Calu3 (cell line): ENCODE measurements at regions of chr18 and their contacts with region 1.

Region 1: DNA sequence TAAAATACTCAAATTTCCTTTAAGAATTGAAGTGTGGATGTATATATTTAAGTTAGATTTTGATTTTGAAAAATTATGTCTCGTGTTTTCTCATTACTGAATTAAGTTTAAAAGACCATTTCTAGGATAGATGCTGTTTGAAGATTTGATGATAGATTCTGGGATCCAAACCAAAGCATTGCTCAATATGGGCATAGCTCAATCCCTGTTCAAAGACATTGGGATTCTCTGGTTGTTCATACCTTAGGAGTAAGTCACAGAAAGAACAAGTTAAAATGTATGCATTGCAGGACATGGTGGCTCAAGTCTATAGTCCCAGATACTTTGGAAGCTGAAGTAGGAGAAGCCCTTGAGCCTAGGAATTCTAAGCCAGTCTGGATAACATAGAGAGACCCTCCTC is 622.3 kb downstream of the ADCYAP1 start:
- DNase-seq: no peak
- H3K4me3 Mint-ChIP-seq: no peak overlapping the region
- H3K27ac Mint-ChIP-seq: no peak overlapping the region
- H3K4me1 Mint-ChIP-seq: no peaks in the 10 kb centered on the region
- H3K27me3 Mint-ChIP-seq: no peaks in the 10 kb centered on the region
- CTCF ChIP-seq: no peak

Region 2: DNA sequence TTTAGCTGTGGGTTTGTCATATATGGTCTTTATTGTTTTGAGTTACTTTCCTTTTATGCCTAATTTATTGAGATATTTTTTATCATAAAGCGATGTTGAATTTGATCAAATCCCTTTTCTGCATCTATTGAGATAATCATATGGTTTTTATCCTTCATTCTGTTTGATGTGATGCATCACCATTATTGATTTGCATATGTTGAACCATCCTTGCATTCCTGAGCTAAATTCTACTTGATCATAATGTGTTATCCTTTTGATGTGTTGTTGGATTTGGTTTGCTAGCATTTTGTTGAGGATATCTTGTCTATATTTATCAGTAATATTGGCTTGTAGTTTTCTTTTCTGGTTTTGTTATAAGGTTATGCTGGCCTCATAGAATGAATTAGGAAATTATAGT is 313.9 kb before region 1 on chr18:
- CTCF ChIA-PET with region 1: no interaction called
- intact Hi-C with region 1: no loop called
- DNase-seq: no peak
- H3K4me3 Mint-ChIP-seq: no peak overlapping the region
- H3K27ac Mint-ChIP-seq: no peak overlapping the region
- H3K4me1 Mint-ChIP-seq: no peaks in the 10 kb centered on the region
- H3K27me3 Mint-ChIP-seq: no peaks in the 10 kb centered on the region
- CTCF ChIP-seq: no peak

Region 3: GRCh38 chr18:1383464-1383863 is 143.5 kb before region 1 on chr18:
- CTCF ChIA-PET with region 1: no interaction called
- intact Hi-C with region 1: no loop called
- DNase-seq: no peak
- H3K4me3 Mint-ChIP-seq: no peak overlapping the region
- H3K27ac Mint-ChIP-seq: no peak overlapping the region
- H3K4me1 Mint-ChIP-seq: no peaks in the 10 kb centered on the region
- H3K27me3 Mint-ChIP-seq: no peaks in the 10 kb centered on the region
- CTCF ChIP-seq: no peak

Region 4: DNA sequence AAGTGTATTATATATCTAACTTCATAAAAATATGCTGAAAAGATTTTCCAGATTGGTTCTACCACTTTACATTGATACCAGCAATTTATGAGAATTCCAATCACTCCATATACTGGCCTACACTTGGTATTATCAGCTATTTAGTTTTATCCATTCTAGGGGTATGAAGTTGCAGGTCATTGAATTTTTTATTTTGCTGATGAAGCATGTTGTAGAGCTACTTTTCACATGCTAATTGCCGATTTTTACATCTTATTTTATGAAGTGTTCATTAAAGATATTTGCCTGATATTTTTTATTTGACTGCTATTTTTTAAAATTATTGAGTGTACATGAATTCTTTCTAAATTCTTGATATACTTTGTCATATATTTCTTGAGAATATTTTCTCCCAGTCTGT is 80.2 kb before region 1 on chr18:
- CTCF ChIA-PET with region 1: no interaction called
- intact Hi-C with region 1: no loop called
- DNase-seq: no peak
- H3K4me3 Mint-ChIP-seq: no peak overlapping the region
- H3K27ac Mint-ChIP-seq: no peak overlapping the region
- H3K4me1 Mint-ChIP-seq: no peaks in the 10 kb centered on the region
- H3K27me3 Mint-ChIP-seq: no peaks in the 10 kb centered on the region
- CTCF ChIP-seq: no peak

Region 5: DNA sequence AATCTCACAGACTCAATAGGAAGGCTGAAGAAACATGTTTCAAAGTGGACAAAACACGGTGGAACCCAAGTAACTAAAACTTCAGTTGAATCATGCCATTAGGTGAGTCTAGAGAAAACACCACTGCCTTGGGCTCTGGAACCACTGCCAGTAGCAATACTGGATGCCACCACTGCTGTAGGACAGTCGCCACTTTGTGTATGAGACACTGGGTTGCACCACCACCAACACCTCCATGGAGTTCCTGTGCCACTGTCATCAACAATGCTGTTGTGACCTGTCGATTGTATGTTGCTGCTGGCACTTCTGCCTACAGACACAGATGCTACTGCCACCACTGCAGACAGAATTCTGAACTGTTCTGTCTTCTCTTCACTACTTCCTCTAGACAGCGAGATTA is 357.6 kb after region 1 on chr18:
- CTCF ChIA-PET with region 1: no interaction called
- intact Hi-C with region 1: loop called (anchors 5 kb)
- DNase-seq: no peak
- H3K4me3 Mint-ChIP-seq: no peak overlapping the region
- H3K27ac Mint-ChIP-seq: no peak overlapping the region
- H3K4me1 Mint-ChIP-seq: no peaks in the 10 kb centered on the region
- H3K27me3 Mint-ChIP-seq: peaks cover 18% of the 10 kb centered on the region
- CTCF ChIP-seq: no peak